K562 (cell line): ENCODE measurements at regions of chr15 and their contacts with region 1.

Region 1: DNA sequence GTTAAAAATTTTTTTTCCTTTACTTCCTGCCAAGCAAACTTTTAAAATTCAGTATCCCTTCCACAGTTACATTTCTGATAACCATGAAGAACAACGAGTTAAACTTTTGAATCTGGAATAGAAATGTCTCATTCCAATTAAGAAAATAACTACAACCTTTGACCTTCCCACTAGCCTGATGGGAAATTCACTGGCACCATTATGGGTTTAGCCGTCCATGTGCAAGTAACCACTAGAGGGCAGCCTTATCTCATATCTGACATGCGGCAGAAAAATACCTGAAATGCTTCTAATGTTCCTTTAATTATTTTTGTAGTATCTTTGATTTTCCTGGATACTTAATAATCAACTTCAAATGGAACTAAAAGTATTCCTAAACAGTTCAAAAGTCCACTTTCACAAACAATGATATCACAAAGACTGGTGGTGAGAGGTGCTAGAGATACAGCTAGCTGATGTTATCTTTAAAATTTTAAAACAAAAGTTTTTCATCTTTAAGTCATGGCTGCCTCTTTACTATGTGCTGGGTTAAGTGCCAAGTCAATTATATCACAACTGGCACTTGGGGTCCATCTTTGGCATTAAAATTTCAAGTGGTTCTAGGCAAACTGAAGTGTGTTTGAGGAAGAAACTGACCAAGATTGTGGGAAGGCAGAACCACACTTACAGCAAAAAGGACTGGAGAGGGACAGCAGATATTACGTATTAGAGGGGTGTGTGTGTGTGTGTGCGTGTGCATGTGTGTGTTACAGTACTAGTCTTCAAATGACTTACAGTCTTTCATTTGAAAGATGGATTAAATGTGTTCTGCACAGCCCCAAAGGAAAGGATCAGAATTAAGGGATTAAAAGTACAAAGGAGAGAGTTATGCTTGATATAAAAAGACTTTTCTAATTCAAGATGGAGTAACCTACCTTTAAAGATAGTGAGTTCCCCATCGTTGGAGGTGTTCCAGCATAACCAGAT is 107.1 kb upstream of the ICE2 start:
- DNase-seq: peak; percentile 69 to 74 (median 72)
- ATAC-seq: peak; percentile 87
- H3K4me3 ChIP-seq: no peak overlapping the region
- H3K27ac ChIP-seq: no peak overlapping the region
- H3K4me1 ChIP-seq: no peaks in the 10 kb centered on the region; a peak in 1 of 5 replicates
- H3K27me3 ChIP-seq: peaks cover 3 to 7% of the 10 kb centered on the region in 2 experiments; a peak in 4 of 5 replicates
- CTCF ChIP-seq: peak; percentile 70 to 92 (median 75)
- EP300 ChIP-seq: no peak
- POLR2A ChIP-seq: no peak
- RAD21 ChIP-seq: peak; percentile 77 to 85

Region 2: DNA sequence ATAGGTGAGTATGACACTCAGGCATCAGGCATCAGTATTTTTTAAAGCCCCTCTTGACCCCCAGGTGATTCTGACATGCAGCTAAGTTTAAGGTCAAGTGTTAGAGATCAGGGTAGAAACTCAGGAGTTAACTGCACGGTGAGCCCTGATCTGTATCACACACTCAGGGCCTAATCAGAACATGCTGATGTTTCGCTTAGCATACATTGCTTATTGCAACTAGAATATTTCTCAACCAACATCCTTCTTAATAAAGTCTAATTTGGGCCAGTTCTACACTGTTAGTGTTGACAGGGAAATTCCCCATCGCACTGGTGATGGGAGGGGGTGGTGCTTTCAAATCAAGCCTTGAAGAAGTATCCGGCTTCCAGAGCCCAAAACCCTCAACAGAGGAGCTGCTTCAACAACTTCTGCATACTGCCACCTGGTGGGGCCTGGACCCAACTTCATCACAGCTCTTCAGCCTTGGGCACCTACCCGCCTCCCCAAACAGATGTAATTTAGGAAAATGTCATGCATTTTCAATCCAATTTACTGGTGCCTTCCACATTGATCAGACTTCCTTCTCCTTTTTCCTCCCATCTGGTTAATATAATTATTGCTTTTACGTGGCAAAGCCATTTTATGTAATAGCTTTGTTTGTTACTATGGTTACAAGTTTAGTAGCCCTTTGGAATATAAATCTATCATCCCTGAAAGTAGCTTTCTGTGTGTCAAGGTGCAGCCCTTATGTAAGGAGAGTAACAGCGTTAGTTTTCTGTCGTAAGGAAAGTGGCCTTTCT is 330.8 kb after region 1 on chr15:
- CTCF ChIA-PET with region 1: interaction called, 13 read pairs
- POLR2A ChIA-PET with region 1: no interaction called
- in situ Hi-C with region 1: loop called (anchors 5 kb)
- intact Hi-C with region 1: loop called (anchors 2 kb)
- DNase-seq: peak; percentile 37 to 69 (median 60)
- ATAC-seq: peak; percentile 89
- H3K4me3 ChIP-seq: no peak overlapping the region
- H3K27ac ChIP-seq: no peak overlapping the region
- H3K4me1 ChIP-seq: no peaks in the 10 kb centered on the region
- H3K27me3 ChIP-seq: no peaks in the 10 kb centered on the region
- CTCF ChIP-seq: peak; percentile 66 to 73 (median 71)
- EP300 ChIP-seq: no peak
- POLR2A ChIP-seq: no peak
- RAD21 ChIP-seq: peak; percentile 56 to 67

Region 3: DNA sequence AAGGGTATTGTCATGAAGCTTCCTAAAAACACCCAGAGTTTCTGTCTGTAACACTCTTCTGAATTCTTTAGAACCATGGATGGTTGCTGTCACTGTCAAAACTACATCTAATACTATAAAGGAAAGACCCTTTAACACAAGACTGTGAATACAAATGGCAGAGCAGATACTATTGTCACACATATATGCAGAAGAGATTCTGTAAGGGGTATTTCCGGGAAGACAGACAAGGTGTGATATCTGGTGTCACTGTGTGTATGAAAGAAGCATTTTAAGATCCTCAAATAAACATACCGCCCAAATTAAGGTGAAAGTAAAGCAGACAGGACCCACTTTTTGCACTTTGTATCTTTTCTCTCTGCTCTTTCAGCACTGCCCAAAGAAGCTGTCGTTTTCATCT is 336.7 kb after region 1 on chr15:
- CTCF ChIA-PET with region 1: interaction called, 13 read pairs
- POLR2A ChIA-PET with region 1: no interaction called
- in situ Hi-C with region 1: loop called (anchors 5 kb)
- intact Hi-C with region 1: loop called (anchors 2 kb)
- DNase-seq: no peak
- ATAC-seq: no peak
- H3K4me3 ChIP-seq: no peak overlapping the region
- H3K27ac ChIP-seq: no peak overlapping the region
- H3K4me1 ChIP-seq: no peaks in the 10 kb centered on the region
- H3K27me3 ChIP-seq: no peaks in the 10 kb centered on the region; a peak in 2 of 5 replicates
- CTCF ChIP-seq: no peak
- EP300 ChIP-seq: no peak
- POLR2A ChIP-seq: no peak
- RAD21 ChIP-seq: no peak